ENCODE measurements at regions of chr11 and their contacts with region 1.

Region 1: DNA sequence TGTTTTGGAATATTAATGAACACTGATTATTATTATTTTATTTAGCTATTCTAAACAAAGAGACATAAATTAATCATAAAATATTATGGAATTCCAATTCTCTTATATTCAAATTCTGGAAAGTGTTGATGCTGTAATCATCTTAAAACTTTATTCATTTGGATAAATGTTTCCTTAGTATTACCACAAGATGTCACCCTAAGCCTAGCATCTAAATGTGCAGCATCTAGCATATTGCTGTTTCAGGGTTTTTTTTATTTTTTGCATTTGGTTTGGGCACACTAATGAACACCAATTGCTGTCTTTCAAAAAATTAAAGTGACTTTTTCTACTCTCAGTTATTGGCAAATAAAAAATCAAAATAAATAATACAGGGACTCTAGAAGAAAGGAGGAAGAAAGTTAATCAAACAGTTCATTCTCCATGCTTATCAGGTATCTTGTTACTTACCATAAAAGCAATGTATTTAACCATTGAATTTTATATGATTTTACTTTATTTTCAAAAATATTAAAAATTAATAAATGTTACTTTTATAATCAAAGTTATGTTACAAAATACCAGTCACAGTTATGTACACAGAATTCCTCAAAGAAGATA is 31.8 kb downstream of the DLG2 start:
- DNase-seq: peak; percentile 34
- CTCF ChIP-seq: peak; percentile 53

Region 2: GRCh38 chr11:84558085-84558905 is 1037.1 kb before region 1 on chr11:
- in situ Hi-C with region 1: loop called (anchors 25 kb)
- DNase-seq: peak; percentile 10
- CTCF ChIP-seq: peak; percentile 87

Measured in GM13977 (cell line).